ENCODE measurements at regions of chr4 and their contacts with region 1.

Region 1: GRCh38 chr4:40672536-40673526 is 43.2 kb upstream of the RBM47 start:
- DNase-seq: peak; percentile 37 to 46
- H3K4me3 ChIP-seq: no peak overlapping the region
- H3K4me3 Mint-ChIP-seq: peak overlapping the region; percentile 52
- H3K27ac Mint-ChIP-seq: peak overlapping the region; percentile 84
- H3K4me1 ChIP-seq: peaks cover 38% of the 10 kb centered on the region
- H3K4me1 Mint-ChIP-seq: peaks cover 34% of the 10 kb centered on the region
- H3K27me3 ChIP-seq: no peaks in the 10 kb centered on the region
- H3K27me3 Mint-ChIP-seq: no peaks in the 10 kb centered on the region
- CTCF ChIP-seq: no peak

Region 2: GRCh38 chr4:40149960-40150385 is 522.9 kb before region 1 on chr4:
- CTCF ChIA-PET with region 1: no interaction called
- POLR2A ChIA-PET with region 1: no interaction called
- intact Hi-C with region 1: no loop called
- DNase-seq: peak; percentile 54 to 69
- H3K4me3 ChIP-seq: no peak overlapping the region
- H3K4me3 Mint-ChIP-seq: no peak overlapping the region
- H3K27ac Mint-ChIP-seq: no peak overlapping the region
- H3K4me1 ChIP-seq: peaks cover 15% of the 10 kb centered on the region; the same call in 1 of the 2 replicates
- H3K4me1 Mint-ChIP-seq: no peaks in the 10 kb centered on the region
- H3K27me3 ChIP-seq: no peaks in the 10 kb centered on the region
- H3K27me3 Mint-ChIP-seq: no peaks in the 10 kb centered on the region
- CTCF ChIP-seq: peak; percentile 74 to 79

Region 3: DNA sequence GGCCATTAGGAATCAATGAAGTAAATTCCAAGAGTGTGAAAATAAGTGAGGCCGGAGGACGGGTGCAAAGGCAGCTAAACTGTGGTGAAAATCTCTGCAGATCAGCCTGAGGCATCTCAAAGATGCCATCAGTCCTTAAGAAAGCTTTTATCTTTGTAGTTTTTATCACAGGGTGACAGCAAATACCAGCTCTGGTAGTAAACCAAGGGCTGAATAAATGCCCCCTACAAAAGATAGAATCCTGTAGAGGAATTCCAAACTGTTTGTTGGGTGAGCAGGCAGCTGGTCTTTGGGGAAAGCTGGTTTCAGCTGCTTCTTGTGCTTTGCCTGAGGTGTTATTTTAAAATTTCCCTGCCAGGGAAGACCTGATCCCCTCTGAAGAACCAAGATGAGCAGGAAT is 21.5 kb before region 1 on chr4:
- CTCF ChIA-PET with region 1: no interaction called
- POLR2A ChIA-PET with region 1: no interaction called
- intact Hi-C with region 1: loop called (anchors 2 kb)
- DNase-seq: no peak
- H3K4me3 ChIP-seq: no peak overlapping the region
- H3K4me3 Mint-ChIP-seq: peak overlapping the region; percentile 24
- H3K27ac Mint-ChIP-seq: peak overlapping the region; percentile 75
- H3K4me1 ChIP-seq: peaks cover 27% of the 10 kb centered on the region
- H3K4me1 Mint-ChIP-seq: peaks cover 21% of the 10 kb centered on the region
- H3K27me3 ChIP-seq: no peaks in the 10 kb centered on the region
- H3K27me3 Mint-ChIP-seq: no peaks in the 10 kb centered on the region
- CTCF ChIP-seq: no peak

Measured in Caco-2 (cell line).